HepG2 (cell line): ENCODE measurements at regions of chr2 and their contacts with region 1.

Region 1: DNA sequence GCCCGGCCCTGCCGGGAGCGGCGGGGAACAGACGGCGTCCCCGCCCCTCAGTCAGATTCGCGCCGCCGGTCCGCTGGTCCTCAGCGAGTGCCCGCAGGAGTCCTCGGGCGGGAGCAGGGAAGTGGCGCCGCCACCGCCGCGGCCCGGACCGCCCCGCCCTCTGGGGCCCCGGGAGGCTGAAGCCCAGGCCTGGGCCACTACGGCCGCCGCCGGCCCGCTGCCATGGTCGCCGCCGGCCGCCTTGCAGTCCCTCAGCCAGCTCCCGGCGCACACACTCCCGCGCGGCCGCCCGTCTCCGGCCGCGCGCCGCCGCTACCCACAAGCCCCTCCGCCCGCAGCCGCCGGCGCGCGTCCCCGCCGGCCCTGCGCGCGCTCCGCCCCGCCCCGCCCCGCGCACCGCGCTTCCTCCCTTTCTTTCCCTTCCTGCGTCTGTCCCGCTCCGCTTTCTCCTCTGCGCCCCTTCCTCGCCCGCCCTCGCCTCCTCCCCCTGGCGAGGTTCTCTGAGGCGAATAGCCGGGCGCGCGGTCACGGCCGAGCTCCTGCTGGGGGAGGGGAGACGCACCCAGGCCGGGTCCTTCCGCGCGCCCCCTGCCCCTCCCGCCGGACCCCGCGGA is at the start of gene ROCK2:
- DNase-seq: peak; percentile 88
- ATAC-seq: peak; percentile 52
- H3K4me3 ChIP-seq: peak within 1 kb of the TSS; percentile 72 to 96 (median 86)
- H3K27ac ChIP-seq: peak within 1 kb of the TSS; percentile 98
- H3K4me1 ChIP-seq: peaks cover 52% of the 10 kb centered on the region
- H3K27me3 ChIP-seq: no peaks in the 10 kb centered on the region; a peak in 1 of 5 replicates
- CTCF ChIP-seq: peak; percentile 19; the same call in 1 of the 2 replicates
- EP300 ChIP-seq: peak in 1 of 2 experiments; percentile 52; a peak in 2 of 4 replicates
- POLR2A ChIP-seq: peak; percentile 17 to 80; a peak in 3 of 4 replicates
- RAD21 ChIP-seq: no peak
- total RNA-seq, gene ROCK2: 119 and 174 TPM in 2 replicates

Region 2: DNA sequence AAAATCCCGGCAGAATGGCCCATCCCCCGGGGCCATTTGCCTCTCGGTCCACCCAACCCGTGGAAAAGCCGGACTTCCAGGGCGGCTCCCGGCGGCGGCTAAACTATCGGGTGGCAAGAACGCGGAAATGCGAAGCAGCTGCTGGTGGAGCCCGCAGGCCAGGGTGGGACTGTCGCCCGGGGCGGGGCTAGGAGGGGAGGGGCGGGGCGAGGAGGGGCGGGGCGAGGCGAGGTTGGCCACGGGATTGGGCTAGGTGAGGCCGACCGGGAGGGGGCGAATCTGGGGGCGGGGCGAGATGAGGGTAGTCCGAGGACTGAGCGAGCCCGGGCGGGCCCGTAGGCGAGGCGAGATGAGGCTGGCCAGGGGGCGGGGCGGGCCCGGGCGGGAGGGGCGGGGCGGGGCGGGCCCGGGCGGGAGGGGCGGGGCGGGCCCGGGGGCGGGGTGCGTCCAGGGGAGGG is 189.5 kb before region 1 on chr2:
- CTCF ChIA-PET with region 1: no interaction called
- POLR2A ChIA-PET with region 1: interaction called, 14 read pairs
- in situ Hi-C with region 1: no loop called
- intact Hi-C with region 1: no loop called
- DNase-seq: peak; percentile 92
- ATAC-seq: peak; percentile 64
- H3K4me3 ChIP-seq: peak overlapping the region; percentile 54 to 86 (median 56)
- H3K27ac ChIP-seq: no peak overlapping the region
- H3K4me1 ChIP-seq: peaks cover 50% of the 10 kb centered on the region
- H3K27me3 ChIP-seq: peaks cover 6 to 58% of the 10 kb centered on the region in 2 experiments; a peak in 4 of 5 replicates
- CTCF ChIP-seq: no peak
- EP300 ChIP-seq: 0 out of 4 replicates have a peak, but pooled peaks of 1 of the 2 experiments have one; percentile 8
- POLR2A ChIP-seq: peak in 1 of 2 experiments; percentile 44; a peak in 2 of 4 replicates
- RAD21 ChIP-seq: no peak

Region 3: DNA sequence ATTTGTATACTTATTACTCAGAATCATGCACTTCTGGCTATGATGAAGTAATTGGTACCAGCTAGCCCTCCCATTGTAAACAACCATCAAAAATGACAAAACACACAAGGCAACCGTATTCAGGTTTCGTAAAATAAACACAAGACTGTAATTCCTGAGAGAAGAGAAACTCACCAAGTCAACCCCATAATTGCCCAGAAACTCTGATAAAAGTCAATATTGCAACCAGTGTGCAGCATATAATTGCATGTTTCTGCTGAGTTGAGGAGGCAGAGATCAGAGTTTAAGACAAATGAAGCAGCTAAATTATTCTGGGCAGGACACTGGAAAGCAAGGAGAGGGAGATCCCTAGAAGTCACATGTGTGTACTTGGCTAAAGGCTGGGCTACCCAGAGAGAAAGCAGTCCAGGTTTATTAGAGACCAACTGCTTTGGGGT is 90.3 kb before region 1 on chr2:
- CTCF ChIA-PET with region 1: no interaction called
- POLR2A ChIA-PET with region 1: no interaction called
- in situ Hi-C with region 1: no loop called
- intact Hi-C with region 1: no loop called
- DNase-seq: peak; percentile 63
- ATAC-seq: peak; percentile 38
- H3K4me3 ChIP-seq: no peak overlapping the region
- H3K27ac ChIP-seq: peak overlapping the region; percentile 30
- H3K4me1 ChIP-seq: peaks cover 14% of the 10 kb centered on the region
- H3K27me3 ChIP-seq: no peaks in the 10 kb centered on the region
- CTCF ChIP-seq: no peak
- EP300 ChIP-seq: 0 out of 4 replicates have a peak, but pooled peaks of 1 of the 2 experiments have one; percentile 10
- POLR2A ChIP-seq: no peak
- RAD21 ChIP-seq: no peak

Region 4: GRCh38 chr2:11332596-11332995 is 11.9 kb before region 1 on chr2:
- CTCF ChIA-PET with region 1: no interaction called
- POLR2A ChIA-PET with region 1: interaction called, 28 read pairs
- in situ Hi-C with region 1: no loop called
- intact Hi-C with region 1: no loop called
- DNase-seq: no peak
- ATAC-seq: no peak
- H3K4me3 ChIP-seq: no peak overlapping the region
- H3K27ac ChIP-seq: no peak overlapping the region
- H3K4me1 ChIP-seq: peaks cover 83% of the 10 kb centered on the region
- H3K27me3 ChIP-seq: no peaks in the 10 kb centered on the region
- CTCF ChIP-seq: no peak
- EP300 ChIP-seq: no peak
- POLR2A ChIP-seq: no peak
- RAD21 ChIP-seq: no peak

Region 5: GRCh38 chr2:11370377-11371091 is 26.1 kb after region 1 on chr2:
- CTCF ChIA-PET with region 1: no interaction called
- POLR2A ChIA-PET with region 1: interaction called, 220 read pairs
- in situ Hi-C with region 1: loop called (anchors 5 kb)
- intact Hi-C with region 1: loop called (anchors 1 kb)
- DNase-seq: peak; percentile 99
- ATAC-seq: peak; percentile 75
- H3K4me3 ChIP-seq: peak overlapping the region in 1 of 3 experiments; percentile 8; a peak in 1 of 6 replicates
- H3K27ac ChIP-seq: peak overlapping the region; percentile 58
- H3K4me1 ChIP-seq: peaks cover 100% of the 10 kb centered on the region
- H3K27me3 ChIP-seq: no peaks in the 10 kb centered on the region
- CTCF ChIP-seq: no peak
- EP300 ChIP-seq: peak; percentile 83; a peak in 3 of 4 replicates
- POLR2A ChIP-seq: no peak; a peak in 1 of 4 replicates
- RAD21 ChIP-seq: peak; percentile 41

Region 6: GRCh38 chr2:11406267-11406957 is 62.0 kb after region 1 on chr2:
- CTCF ChIA-PET with region 1: no interaction called
- POLR2A ChIA-PET with region 1: interaction called, 42 read pairs
- in situ Hi-C with region 1: loop called (anchors 5 kb)
- intact Hi-C with region 1: no loop called
- DNase-seq: no peak
- ATAC-seq: no peak
- H3K4me3 ChIP-seq: no peak overlapping the region
- H3K27ac ChIP-seq: no peak overlapping the region
- H3K4me1 ChIP-seq: peaks cover 58% of the 10 kb centered on the region
- H3K27me3 ChIP-seq: no peaks in the 10 kb centered on the region
- CTCF ChIP-seq: no peak
- EP300 ChIP-seq: no peak
- POLR2A ChIP-seq: no peak
- RAD21 ChIP-seq: no peak